Activated CD4-positive, alpha-beta T cell treated with anti-CD3 and anti-CD28 coated beads for 36 hours (primary cell): ENCODE measurements at regions of chr2 and their contacts with region 1.

Region 1: GRCh38 chr2:54704688-54705605 is 18.5 kb upstream of the EML6 start:
- DNase-seq: no peak
- ATAC-seq: peak; percentile 69
- H3K4me3 Mint-ChIP-seq: no peak overlapping the region
- H3K27ac Mint-ChIP-seq: no peak overlapping the region
- H3K4me1 Mint-ChIP-seq: peaks cover 9% of the 10 kb centered on the region
- H3K27me3 Mint-ChIP-seq: peaks cover 25% of the 10 kb centered on the region

Region 2: GRCh38 chr2:54455563-54456361 is 249.2 kb before region 1 on chr2 and contains the start of gene SPTBN1:
- CTCF ChIA-PET with region 1: no interaction called
- POLR2A ChIA-PET with region 1: no interaction called
- intact Hi-C with region 1: loop called in 1 of 2 experiments (anchors 5 kb)
- DNase-seq: peak; percentile 55
- ATAC-seq: peak; percentile 53
- H3K4me3 Mint-ChIP-seq: peak within 1 kb of the TSS; percentile 72
- H3K27ac Mint-ChIP-seq: no peak within 1 kb of the TSS
- H3K4me1 Mint-ChIP-seq: peaks cover 12% of the 10 kb centered on the region
- H3K27me3 Mint-ChIP-seq: peaks cover 45% of the 10 kb centered on the region
- total RNA-seq, gene SPTBN1: 76.6 to 86.8 TPM

Region 3: GRCh38 chr2:54558188-54559005 is 146.6 kb before region 1 on chr2:
- CTCF ChIA-PET with region 1: interaction called, 11 read pairs
- POLR2A ChIA-PET with region 1: no interaction called
- intact Hi-C with region 1: no loop called
- DNase-seq: peak; percentile 86
- ATAC-seq: peak; percentile 54
- H3K4me3 Mint-ChIP-seq: peak overlapping the region; percentile 91
- H3K27ac Mint-ChIP-seq: peak overlapping the region; percentile 94
- H3K4me1 Mint-ChIP-seq: peaks cover 43% of the 10 kb centered on the region
- H3K27me3 Mint-ChIP-seq: no peaks in the 10 kb centered on the region

Region 4: DNA sequence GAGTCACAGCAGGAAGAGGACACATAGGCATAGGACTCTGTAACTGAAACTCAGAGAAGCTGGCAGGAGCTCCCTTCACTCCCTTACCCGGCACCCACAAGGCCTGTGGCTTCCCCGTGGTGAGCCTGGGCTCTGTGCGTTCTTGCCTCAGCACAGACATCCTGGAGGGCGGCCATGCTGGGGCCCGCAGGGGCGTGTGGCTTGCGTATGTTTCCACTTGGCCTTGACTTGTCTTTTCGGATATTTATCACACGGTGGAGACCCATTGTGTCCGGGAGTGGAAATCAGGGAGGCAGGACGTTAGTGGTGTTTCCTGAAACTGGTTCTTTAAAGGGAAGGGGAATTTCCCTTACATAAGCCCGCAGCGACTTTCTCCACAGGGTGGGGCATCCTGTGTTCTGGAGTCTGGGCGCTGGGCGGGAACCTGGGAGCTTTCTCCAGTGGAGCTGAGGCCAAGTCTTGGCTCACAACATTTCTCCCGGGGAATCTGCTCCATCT is 31.4 kb before region 1 on chr2:
- CTCF ChIA-PET with region 1: interaction called, 222 read pairs
- POLR2A ChIA-PET with region 1: no interaction called
- intact Hi-C with region 1: no loop called
- DNase-seq: peak; percentile 75
- ATAC-seq: peak; percentile 95
- H3K4me3 Mint-ChIP-seq: no peak overlapping the region
- H3K27ac Mint-ChIP-seq: no peak overlapping the region
- H3K4me1 Mint-ChIP-seq: peaks cover 14% of the 10 kb centered on the region
- H3K27me3 Mint-ChIP-seq: peaks cover 39% of the 10 kb centered on the region

Region 5: DNA sequence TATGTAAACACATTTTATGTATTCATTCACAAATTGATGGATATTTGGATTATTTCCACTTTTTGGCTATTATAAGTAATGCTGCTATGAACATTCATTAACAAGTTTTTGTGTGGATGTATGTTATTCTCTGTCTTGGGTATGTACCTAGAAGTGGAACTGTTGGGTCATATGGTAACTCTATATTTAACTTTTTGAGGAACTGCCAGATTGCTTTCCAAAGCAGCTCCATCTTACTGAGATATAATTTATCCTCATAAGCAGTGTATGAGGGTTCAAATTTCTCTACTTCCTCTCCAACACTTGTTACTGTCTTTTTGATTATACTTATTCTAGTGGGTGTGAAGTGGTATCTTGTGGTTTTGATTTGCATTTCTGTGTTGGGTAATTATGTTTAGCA is 11.4 kb after region 1 on chr2:
- CTCF ChIA-PET with region 1: interaction called, 21 read pairs
- POLR2A ChIA-PET with region 1: interaction called, 4 read pairs
- intact Hi-C with region 1: no loop called
- DNase-seq: no peak
- ATAC-seq: no peak
- H3K4me3 Mint-ChIP-seq: no peak overlapping the region
- H3K27ac Mint-ChIP-seq: no peak overlapping the region
- H3K4me1 Mint-ChIP-seq: no peaks in the 10 kb centered on the region
- H3K27me3 Mint-ChIP-seq: peaks cover 26% of the 10 kb centered on the region